CD4-positive, alpha-beta memory T cell (primary cell): ENCODE measurements at regions of chr13 and their contacts with region 1.

Region 1: GRCh38 chr13:25901460-25902376 is 150.1 kb downstream of the SHISA2 start:
- DNase-seq: peak; percentile 76 to 89 (median 84)
- H3K4me3 ChIP-seq: peak overlapping the region in 1 of 2 donors; percentile 2
- H3K4me3 Mint-ChIP-seq: peak overlapping the region in 4 of 8 donors; percentile 19 to 50 (median 38)
- H3K27ac ChIP-seq: peak overlapping the region; percentile 61
- H3K27ac Mint-ChIP-seq: peak overlapping the region in 1 of 7 donors; percentile 91
- H3K4me1 ChIP-seq: peaks cover 71% of the 10 kb centered on the region
- H3K4me1 Mint-ChIP-seq: peaks cover 0 to 26% (median 24%) of the 10 kb centered on the region in 4 donors
- H3K27me3 ChIP-seq: no peaks in the 10 kb centered on the region
- H3K27me3 Mint-ChIP-seq: no peaks in the 10 kb centered on the region

Region 2: DNA sequence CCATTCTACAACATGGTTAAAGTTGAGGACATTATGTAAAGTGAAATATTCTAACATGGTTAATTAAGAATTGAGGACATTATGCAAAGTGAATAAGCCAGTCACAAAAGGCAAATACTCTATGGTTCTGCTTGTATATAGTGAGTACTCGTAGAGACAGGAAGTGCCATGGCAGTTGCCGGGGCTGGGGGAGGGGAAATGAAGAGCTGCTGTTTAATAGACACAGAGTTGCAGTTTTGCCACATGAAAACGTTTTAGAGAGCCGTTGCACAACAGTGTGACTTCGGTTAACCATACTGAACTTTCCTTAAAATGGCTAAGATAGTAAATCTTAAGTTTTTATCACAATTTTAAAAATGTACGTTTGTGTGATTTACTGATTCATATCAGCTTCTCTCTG is 26.8 kb before region 1 on chr13:
- CTCF ChIA-PET with region 1: no interaction called
- POLR2A ChIA-PET with region 1: interaction called, 10 read pairs
- intact Hi-C with region 1: loop called (anchors 1 kb)
- DNase-seq: peak; percentile 63 to 84 (median 73)
- H3K4me3 ChIP-seq: no peak overlapping the region
- H3K4me3 Mint-ChIP-seq: peak overlapping the region; percentile 34 to 85 (median 58)
- H3K27ac ChIP-seq: peak overlapping the region; percentile 44
- H3K27ac Mint-ChIP-seq: peak overlapping the region; percentile 67 to 91 (median 84)
- H3K4me1 ChIP-seq: peaks cover 49% of the 10 kb centered on the region
- H3K4me1 Mint-ChIP-seq: peaks cover 37 to 69% (median 54%) of the 10 kb centered on the region in 4 donors
- H3K27me3 ChIP-seq: no peaks in the 10 kb centered on the region
- H3K27me3 Mint-ChIP-seq: no peaks in the 10 kb centered on the region

Region 3: DNA sequence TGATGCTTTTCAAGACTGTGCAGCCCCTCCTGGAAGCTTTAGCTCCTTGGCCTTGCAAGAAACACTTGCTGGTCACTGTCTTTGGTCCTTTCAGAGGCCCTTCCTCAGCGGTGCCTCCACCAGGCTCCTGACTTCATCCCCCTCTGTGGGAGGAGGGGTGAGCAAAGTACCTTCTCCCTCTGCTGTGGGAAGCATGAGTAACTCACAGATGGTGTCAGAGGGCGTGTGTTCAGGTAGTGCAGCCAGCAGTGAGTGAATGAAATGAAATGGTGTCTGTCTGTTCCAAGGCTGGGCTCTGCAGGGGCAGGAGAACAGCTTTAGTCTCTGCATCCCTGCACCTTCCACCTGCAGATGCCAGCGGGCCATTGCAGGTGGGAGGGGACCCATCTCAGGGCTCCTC is 47.2 kb after region 1 on chr13:
- CTCF ChIA-PET with region 1: no interaction called
- POLR2A ChIA-PET with region 1: interaction called, 4 read pairs
- intact Hi-C with region 1: loop called (anchors 5 kb)
- DNase-seq: no peak
- H3K4me3 ChIP-seq: no peak overlapping the region
- H3K4me3 Mint-ChIP-seq: no peak overlapping the region
- H3K27ac ChIP-seq: no peak overlapping the region
- H3K27ac Mint-ChIP-seq: no peak overlapping the region
- H3K4me1 ChIP-seq: peaks cover 5% of the 10 kb centered on the region
- H3K4me1 Mint-ChIP-seq: peaks cover 0 to 16% (median 7%) of the 10 kb centered on the region in 4 donors
- H3K27me3 ChIP-seq: no peaks in the 10 kb centered on the region
- H3K27me3 Mint-ChIP-seq: no peaks in the 10 kb centered on the region

Region 4: GRCh38 chr13:26051657-26052311 is 150.1 kb after region 1 on chr13 and contains the start of gene SHISA2:
- CTCF ChIA-PET with region 1: no interaction called
- POLR2A ChIA-PET with region 1: no interaction called
- intact Hi-C with region 1: loop called (anchors 2 kb)
- DNase-seq: peak in 2 of 5 donors; percentile 26 to 41
- H3K4me3 ChIP-seq: peak within 1 kb of the TSS; percentile 11 to 28
- H3K4me3 Mint-ChIP-seq: peak within 1 kb of the TSS; percentile 67 to 85 (median 80)
- H3K27ac ChIP-seq: no peak within 1 kb of the TSS
- H3K27ac Mint-ChIP-seq: peak within 1 kb of the TSS in 2 of 7 donors; percentile 14 to 34
- H3K4me1 ChIP-seq: peaks cover 16% of the 10 kb centered on the region
- H3K4me1 Mint-ChIP-seq: peaks cover 7 to 27% (median 19%) of the 10 kb centered on the region in 4 donors
- H3K27me3 ChIP-seq: peaks cover 20% of the 10 kb centered on the region
- H3K27me3 Mint-ChIP-seq: peaks cover 19 to 22% of the 10 kb centered on the region in 2 donors
- total RNA-seq, gene SHISA2: 0.36 to 0.58 TPM